Common myeloid progenitor, CD34-positive (primary cell): ENCODE measurements at regions of chr2 and their contacts with region 1.

Region 1: GRCh38 chr2:85327822-85328617 is at the start of gene TGOLN2:
- DNase-seq: peak; percentile 94 to 97 (median 96)
- H3K4me3 ChIP-seq: peak within 1 kb of the TSS; percentile 84 to 97 (median 96)
- H3K27ac ChIP-seq: peak within 1 kb of the TSS; percentile 97 to 99
- H3K4me1 ChIP-seq: peaks cover 16 to 44% (median 38%) of the 10 kb centered on the region in 4 experiments
- H3K27me3 ChIP-seq: no peaks in the 10 kb centered on the region

Region 2: GRCh38 chr2:85215448-85216401 is 112.3 kb before region 1 on chr2:
- CTCF ChIA-PET with region 1: no interaction called
- POLR2A ChIA-PET with region 1: no interaction called
- DNase-seq: peak in 2 of 3 donors; percentile 7 to 22
- H3K4me3 ChIP-seq: no peak overlapping the region
- H3K27ac ChIP-seq: no peak overlapping the region
- H3K4me1 ChIP-seq: no peaks in the 10 kb centered on the region
- H3K27me3 ChIP-seq: peaks cover 0 to 13% (median 7%) of the 10 kb centered on the region in 5 experiments

Region 3: GRCh38 chr2:85243101-85244072 is 84.6 kb before region 1 on chr2:
- CTCF ChIA-PET with region 1: no interaction called
- POLR2A ChIA-PET with region 1: no interaction called
- DNase-seq: peak; percentile 43 to 68 (median 62)
- H3K4me3 ChIP-seq: no peak overlapping the region
- H3K27ac ChIP-seq: no peak overlapping the region
- H3K4me1 ChIP-seq: no peaks in the 10 kb centered on the region
- H3K27me3 ChIP-seq: peaks cover 0 to 10% (median under 1%) of the 10 kb centered on the region in 5 experiments

Region 4: GRCh38 chr2:85288244-85288725 is 39.7 kb before region 1 on chr2:
- CTCF ChIA-PET with region 1: no interaction called
- POLR2A ChIA-PET with region 1: no interaction called
- DNase-seq: no peak
- H3K4me3 ChIP-seq: no peak overlapping the region
- H3K27ac ChIP-seq: no peak overlapping the region
- H3K4me1 ChIP-seq: peaks cover 0 to 14% (median 2%) of the 10 kb centered on the region in 4 experiments
- H3K27me3 ChIP-seq: no peaks in the 10 kb centered on the region

Region 5: GRCh38 chr2:85354286-85355072 is 26.5 kb after region 1 on chr2 and contains the starts of genes ELMOD3 and RETSAT:
- CTCF ChIA-PET with region 1: interaction called, 4 read pairs
- POLR2A ChIA-PET with region 1: interaction called, 12 read pairs
- DNase-seq: peak; percentile 99 to 100 (median 99)
- H3K4me3 ChIP-seq: peak within 1 kb of the TSS; percentile 58 to 96 (median 81)
- H3K27ac ChIP-seq: peak within 1 kb of the TSS; percentile 91 to 96
- H3K4me1 ChIP-seq: peaks cover 4 to 24% (median 22%) of the 10 kb centered on the region in 4 experiments
- H3K27me3 ChIP-seq: no peaks in the 10 kb centered on the region